Naive thymus-derived CD8-positive, alpha-beta T cell (primary cell): ENCODE measurements at regions of chr1 and their contacts with region 1.

Region 1: GRCh38 chr1:61077676-61078541 is 4.5 kb upstream of the NFIA start:
- DNase-seq: peak; percentile 77 to 98 (median 92)
- ATAC-seq: peak; percentile 68 to 73
- H3K4me3 Mint-ChIP-seq: peak overlapping the region; percentile 87 to 99 (median 92)
- H3K27ac Mint-ChIP-seq: peak overlapping the region; percentile 92 to 99 (median 99)
- H3K4me1 Mint-ChIP-seq: peaks cover 27 to 52% (median 49%) of the 10 kb centered on the region in 4 donors
- H3K27me3 Mint-ChIP-seq: peaks cover 0 to 3% (median 0%) of the 10 kb centered on the region in 5 donors

Region 2: DNA sequence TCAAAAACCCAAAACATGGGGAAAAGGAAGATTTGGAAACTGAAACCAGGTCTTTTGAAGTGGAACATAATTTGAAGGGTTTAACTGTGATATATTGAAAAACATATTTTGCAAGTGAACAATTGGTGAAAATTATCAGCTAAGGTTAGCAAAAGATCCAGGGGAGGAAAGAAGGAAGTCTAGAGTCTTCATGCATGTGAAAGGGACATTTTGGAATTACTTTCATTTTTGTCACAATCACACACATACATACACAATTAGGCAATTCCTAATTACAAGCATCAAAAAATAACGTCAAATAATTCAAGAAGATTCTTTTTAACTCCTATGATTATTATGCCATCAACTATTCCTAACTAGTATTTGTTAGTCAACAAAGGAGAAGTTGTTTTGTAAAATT is 60.3 kb before region 1 on chr1:
- POLR2A ChIA-PET with region 1: no interaction called
- DNase-seq: no peak
- ATAC-seq: no peak
- H3K4me3 Mint-ChIP-seq: no peak overlapping the region
- H3K27ac Mint-ChIP-seq: no peak overlapping the region
- H3K4me1 Mint-ChIP-seq: peaks cover 0 to 3% (median 0%) of the 10 kb centered on the region in 4 donors
- H3K27me3 Mint-ChIP-seq: peaks cover 4 to 23% (median 15%) of the 10 kb centered on the region in 5 donors

Region 3: DNA sequence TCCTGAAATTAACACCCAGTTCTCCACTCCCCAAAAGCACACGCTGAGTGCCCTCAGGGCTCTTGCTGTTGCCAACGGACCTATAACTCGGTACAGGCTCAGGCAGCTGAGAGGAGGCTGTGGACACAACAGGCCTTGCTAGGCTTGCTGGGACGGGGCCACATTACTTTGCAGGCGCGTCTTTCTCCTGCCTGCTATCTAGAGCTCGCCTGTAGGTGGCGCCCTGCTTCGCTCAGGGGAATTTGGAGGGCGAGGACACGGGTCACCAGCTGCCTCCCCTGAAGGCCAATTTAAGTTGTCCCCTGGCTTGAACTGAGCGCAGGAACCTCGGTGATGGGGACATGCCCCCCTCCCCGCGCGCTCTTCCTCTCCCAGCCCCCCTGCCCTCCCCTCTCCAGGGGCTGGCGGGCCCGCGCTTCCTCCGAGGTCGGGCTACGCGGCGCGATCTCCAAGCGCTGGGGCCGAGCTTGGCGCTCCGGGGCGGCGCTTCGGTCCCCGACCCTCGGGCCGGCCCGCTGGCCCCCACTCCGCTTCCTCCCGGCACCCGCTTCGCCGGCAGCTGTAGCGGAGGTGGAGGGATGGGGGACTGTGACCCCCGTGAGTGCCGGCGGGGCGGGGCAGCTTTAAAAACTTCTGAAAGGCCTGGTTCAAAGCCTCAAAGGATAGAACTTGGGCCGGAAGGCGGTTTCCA is 27.9 kb before region 1 on chr1:
- POLR2A ChIA-PET with region 1: interaction called, 77 read pairs
- DNase-seq: peak; percentile 71 to 93 (median 86)
- ATAC-seq: peak; percentile 73 to 77
- H3K4me3 Mint-ChIP-seq: peak overlapping the region; percentile 78 to 89 (median 82)
- H3K27ac Mint-ChIP-seq: peak overlapping the region in 1 of 10 donors; percentile 46
- H3K4me1 Mint-ChIP-seq: peaks cover 10 to 33% (median 30%) of the 10 kb centered on the region in 4 donors
- H3K27me3 Mint-ChIP-seq: peaks cover 15 to 47% (median 28%) of the 10 kb centered on the region in 5 donors

Region 4: GRCh38 chr1:61056573-61057439 is 21.1 kb before region 1 on chr1:
- POLR2A ChIA-PET with region 1: interaction called, 77 read pairs
- DNase-seq: peak in 7 of 10 donors; percentile 17 to 72 (median 42)
- ATAC-seq: peak; percentile 56 to 70
- H3K4me3 Mint-ChIP-seq: peak overlapping the region; percentile 85 to 93 (median 90)
- H3K27ac Mint-ChIP-seq: peak overlapping the region in 8 of 10 donors; percentile 18 to 86 (median 75)
- H3K4me1 Mint-ChIP-seq: peaks cover 12 to 38% (median 30%) of the 10 kb centered on the region in 4 donors
- H3K27me3 Mint-ChIP-seq: peaks cover 8 to 55% (median 31%) of the 10 kb centered on the region in 5 donors

Region 5: DNA sequence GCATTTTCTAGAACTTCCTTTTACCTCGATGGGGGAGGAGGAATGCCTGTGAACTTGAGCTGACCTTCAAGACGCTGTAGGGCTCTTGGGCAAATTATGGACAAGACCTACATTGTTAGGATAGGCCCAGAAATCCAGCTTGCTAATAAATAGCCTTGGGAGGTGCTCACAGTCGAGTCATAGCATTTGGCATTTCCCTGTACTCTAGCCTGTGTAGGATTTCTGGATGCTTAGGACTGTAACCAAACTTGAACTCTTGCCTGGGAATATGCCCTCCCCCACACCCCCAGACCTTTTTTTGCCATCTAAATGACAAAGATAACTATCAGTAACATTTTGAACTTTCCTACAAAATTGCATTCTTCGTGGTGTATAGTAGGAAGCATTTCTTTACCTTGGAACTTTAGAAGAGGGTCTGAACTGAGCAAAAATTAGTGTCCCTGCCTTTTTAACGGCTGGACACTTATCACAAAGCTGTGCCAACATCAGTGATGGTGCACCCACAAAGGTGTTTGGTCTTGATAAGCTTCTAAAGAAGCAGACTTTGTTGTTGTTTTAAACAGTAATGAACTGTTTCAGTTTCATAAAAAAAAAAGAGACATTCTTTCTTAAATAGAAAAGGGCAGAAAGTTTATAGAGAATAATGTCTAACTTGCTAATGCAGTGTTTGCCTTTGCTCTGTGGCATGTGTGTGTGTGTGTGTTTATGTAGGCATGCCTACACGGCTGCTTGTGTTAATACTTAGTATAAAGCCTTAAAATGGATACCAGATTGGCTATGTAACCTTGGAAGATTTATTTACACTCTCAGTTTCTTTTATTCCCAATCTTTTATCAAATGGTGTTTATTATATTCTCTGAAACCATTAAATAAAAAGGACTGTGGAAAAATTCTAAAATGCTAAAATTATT is 92.7 kb after region 1 on chr1:
- POLR2A ChIA-PET with region 1: no interaction called
- DNase-seq: no peak
- ATAC-seq: no peak
- H3K4me3 Mint-ChIP-seq: no peak overlapping the region
- H3K27ac Mint-ChIP-seq: no peak overlapping the region
- H3K4me1 Mint-ChIP-seq: peaks cover 0 to 1% (median under 1%) of the 10 kb centered on the region in 4 donors
- H3K27me3 Mint-ChIP-seq: peaks cover 0 to 5% (median 2%) of the 10 kb centered on the region in 5 donors